ENCODE measurements at regions of chr21 and their contacts with region 1.

Region 1: GRCh38 chr21:37267269-37268184 is at the start of gene VPS26C:
- DNase-seq: peak; percentile 99
- ATAC-seq: peak; percentile 86
- H3K4me3 ChIP-seq: peak within 1 kb of the TSS; percentile 69
- H3K27ac ChIP-seq: peak within 1 kb of the TSS; percentile 94
- H3K4me1 ChIP-seq: peaks cover 23% of the 10 kb centered on the region
- H3K27me3 ChIP-seq: no peaks in the 10 kb centered on the region
- CTCF ChIP-seq: no peak
- total RNA-seq, gene VPS26C: 46.8 and 63.3 TPM in 2 replicates

Region 2: DNA sequence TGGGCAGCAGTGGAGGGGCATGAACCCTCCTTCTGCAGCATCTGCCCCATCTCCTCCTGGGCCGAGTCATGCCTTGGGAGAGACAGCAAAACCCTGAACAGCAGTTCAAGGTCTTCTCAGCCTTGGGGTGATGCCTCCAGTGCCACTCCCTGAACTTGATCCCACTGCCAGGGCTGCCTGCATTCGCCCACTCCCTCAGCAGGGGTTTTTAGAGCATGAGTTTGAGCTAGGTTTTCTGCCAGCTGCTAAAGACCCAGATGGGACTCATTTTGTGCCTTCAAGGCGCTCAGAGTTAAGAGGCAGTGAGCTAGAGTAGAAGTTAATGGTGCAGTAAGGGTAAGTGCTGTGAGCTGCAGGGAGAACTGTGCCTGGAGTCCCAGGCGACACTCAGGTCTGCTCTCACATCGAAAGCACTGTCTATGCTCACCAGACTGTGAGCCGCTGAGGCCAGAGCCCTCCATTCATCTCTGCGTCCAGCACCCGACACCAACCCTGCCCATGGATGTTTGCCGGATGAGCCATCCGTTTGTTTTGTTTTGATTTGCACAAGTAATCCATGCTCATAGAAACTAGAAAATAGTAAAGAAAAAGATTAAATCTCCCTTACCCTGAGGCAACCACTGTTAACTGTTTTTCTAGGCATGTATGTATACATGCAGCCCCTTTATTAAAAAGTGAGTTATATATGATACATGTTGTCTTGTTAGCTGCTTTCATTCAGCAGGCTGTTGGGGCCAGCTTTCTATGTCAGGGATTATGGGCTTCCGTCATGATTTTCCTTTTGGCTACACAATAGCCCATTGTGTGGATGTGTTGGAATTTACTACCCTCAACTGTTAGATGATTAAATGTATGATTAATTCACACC is 68.2 kb before region 1 on chr21:
- CTCF ChIA-PET with region 1: no interaction called
- POLR2A ChIA-PET with region 1: no interaction called
- intact Hi-C with region 1: loop called (anchors 5 kb)
- DNase-seq: peak; percentile 91
- ATAC-seq: peak; percentile 95
- H3K4me3 ChIP-seq: peak overlapping the region; percentile 18; the same call in 1 of the 2 replicates
- H3K27ac ChIP-seq: peak overlapping the region; percentile 85
- H3K4me1 ChIP-seq: peaks cover 30% of the 10 kb centered on the region
- H3K27me3 ChIP-seq: no peaks in the 10 kb centered on the region
- CTCF ChIP-seq: no peak

Region 3: GRCh38 chr21:37338671-37339551 is 71.4 kb after region 1 on chr21:
- CTCF ChIA-PET with region 1: no interaction called
- POLR2A ChIA-PET with region 1: no interaction called
- intact Hi-C with region 1: loop called (anchors 1 kb)
- DNase-seq: peak; percentile 97
- ATAC-seq: peak; percentile 95
- H3K4me3 ChIP-seq: peak overlapping the region; percentile 51
- H3K27ac ChIP-seq: peak overlapping the region; percentile 95
- H3K4me1 ChIP-seq: peaks cover 44% of the 10 kb centered on the region
- H3K27me3 ChIP-seq: no peaks in the 10 kb centered on the region
- CTCF ChIP-seq: no peak

Measured in PC-3 (cell line).